Stomach (tissue), 19 donors: ENCODE measurements at regions of chr5 and their contacts with region 1.

Region 1: GRCh38 chr5:79133657-79134451 is 22.2 kb downstream of the BHMT start:
- DNase-seq: peak; percentile 72 to 91
- H3K4me3 ChIP-seq: peak overlapping the region; percentile 22 to 32 (median 27)
- H3K27ac ChIP-seq: peak overlapping the region in 4 of 5 donors; percentile 36 to 73 (median 70)
- H3K4me1 ChIP-seq: peaks cover 6 to 16% (median 12%) of the 10 kb centered on the region in 4 donors
- H3K27me3 ChIP-seq: no peaks in the 10 kb centered on the region
- CTCF ChIP-seq: peak in 5 of 7 experiments; percentile 54 to 71 (median 60)
- EP300 ChIP-seq: no peak
- POLR2A ChIP-seq: no peak

Region 2: DNA sequence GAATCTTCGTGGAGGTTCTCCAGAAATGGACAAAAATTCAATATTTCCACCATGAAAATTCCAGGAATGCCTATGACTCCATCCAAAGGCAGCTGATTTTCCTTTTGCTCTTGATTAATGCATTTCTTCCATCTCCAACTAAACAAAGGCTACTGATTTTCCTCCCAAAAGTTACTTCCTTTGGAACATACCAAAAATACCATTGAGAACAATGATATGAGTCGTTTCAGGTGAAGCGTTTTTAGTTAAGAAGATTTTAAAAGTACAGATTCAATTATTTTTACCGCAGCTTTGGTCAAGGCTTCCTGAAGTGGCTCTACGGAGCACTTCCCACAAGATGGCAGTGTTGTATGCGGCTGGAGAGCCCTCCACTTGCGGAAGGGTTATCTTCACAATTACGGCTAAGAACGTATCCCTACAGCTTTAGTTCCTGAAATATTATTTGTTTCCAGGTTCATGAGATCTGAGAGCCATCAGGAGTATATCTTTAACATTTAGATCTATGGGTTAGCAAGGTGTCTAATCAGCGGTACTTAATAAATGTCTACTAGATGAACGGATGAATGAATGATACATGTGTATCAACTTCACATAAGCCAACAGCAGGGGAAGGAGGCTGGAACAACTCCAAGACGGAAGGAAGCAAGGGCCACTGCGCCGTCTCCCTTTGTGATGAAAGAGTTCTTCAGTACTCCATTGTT is 112.8 kb before region 1 on chr5:
- intact Hi-C with region 1: loop called (anchors 5 kb)
- DNase-seq: peak; percentile 60 to 87
- H3K4me3 ChIP-seq: no peak overlapping the region
- H3K27ac ChIP-seq: no peak overlapping the region
- H3K4me1 ChIP-seq: peaks cover 8 to 32% (median 18%) of the 10 kb centered on the region in 4 donors
- H3K27me3 ChIP-seq: no peaks in the 10 kb centered on the region
- CTCF ChIP-seq: peak in 5 of 7 experiments; percentile 53 to 74 (median 72)
- EP300 ChIP-seq: no peak
- POLR2A ChIP-seq: no peak

Region 3: DNA sequence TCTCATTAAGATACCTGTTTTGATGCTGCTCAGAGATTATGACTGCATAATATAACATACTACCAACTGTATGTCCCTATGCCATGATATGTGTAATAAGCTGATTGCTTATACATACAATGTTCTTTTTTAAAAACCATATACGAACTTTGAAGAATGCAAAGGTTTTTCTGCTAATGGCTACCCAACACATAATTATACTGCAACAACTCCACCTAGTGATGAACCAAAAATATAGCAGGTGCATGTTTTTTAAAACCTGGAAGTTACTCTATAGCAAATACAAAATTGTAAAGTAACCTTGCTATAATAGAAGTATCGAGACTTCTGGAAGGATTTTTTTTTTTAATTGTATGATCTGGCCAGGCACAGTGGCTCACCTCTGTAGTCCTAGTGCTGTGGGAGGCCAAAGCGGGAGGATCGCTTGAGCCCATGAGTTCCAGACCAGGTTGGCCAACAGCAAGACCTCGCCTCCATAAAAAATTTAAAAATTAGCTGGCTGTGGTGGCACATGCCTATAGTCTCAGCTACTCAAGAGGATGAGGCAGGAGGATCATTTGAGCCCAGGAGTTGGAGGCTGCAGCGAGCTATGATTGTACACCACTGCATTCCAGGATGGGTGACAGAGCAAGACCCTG is 331.0 kb after region 1 on chr5:
- intact Hi-C with region 1: loop called (anchors 10 kb)
- DNase-seq: peak in 1 of 2 donors; percentile 53
- H3K4me3 ChIP-seq: no peak overlapping the region
- H3K27ac ChIP-seq: no peak overlapping the region
- H3K4me1 ChIP-seq: peaks cover 0 to 9% (median 4%) of the 10 kb centered on the region in 4 donors
- H3K27me3 ChIP-seq: no peaks in the 10 kb centered on the region
- CTCF ChIP-seq: peak in 5 of 7 experiments; percentile 50 to 67 (median 54)
- EP300 ChIP-seq: no peak
- POLR2A ChIP-seq: no peak